ENCODE measurements at regions of chr4 and their contacts with region 1.

Region 1: GRCh38 chr4:77190053-77190452 is 33.0 kb downstream of the CCNG2 start:
- DNase-seq: peak; percentile 63 to 68
- H3K4me3 ChIP-seq: no peak overlapping the region
- H3K4me3 Mint-ChIP-seq: no peak overlapping the region
- H3K27ac Mint-ChIP-seq: no peak overlapping the region
- H3K4me1 ChIP-seq: peaks cover 13% of the 10 kb centered on the region
- H3K4me1 Mint-ChIP-seq: peaks cover 8% of the 10 kb centered on the region
- H3K27me3 ChIP-seq: no peaks in the 10 kb centered on the region
- H3K27me3 Mint-ChIP-seq: no peaks in the 10 kb centered on the region
- CTCF ChIP-seq: no peak

Region 2: DNA sequence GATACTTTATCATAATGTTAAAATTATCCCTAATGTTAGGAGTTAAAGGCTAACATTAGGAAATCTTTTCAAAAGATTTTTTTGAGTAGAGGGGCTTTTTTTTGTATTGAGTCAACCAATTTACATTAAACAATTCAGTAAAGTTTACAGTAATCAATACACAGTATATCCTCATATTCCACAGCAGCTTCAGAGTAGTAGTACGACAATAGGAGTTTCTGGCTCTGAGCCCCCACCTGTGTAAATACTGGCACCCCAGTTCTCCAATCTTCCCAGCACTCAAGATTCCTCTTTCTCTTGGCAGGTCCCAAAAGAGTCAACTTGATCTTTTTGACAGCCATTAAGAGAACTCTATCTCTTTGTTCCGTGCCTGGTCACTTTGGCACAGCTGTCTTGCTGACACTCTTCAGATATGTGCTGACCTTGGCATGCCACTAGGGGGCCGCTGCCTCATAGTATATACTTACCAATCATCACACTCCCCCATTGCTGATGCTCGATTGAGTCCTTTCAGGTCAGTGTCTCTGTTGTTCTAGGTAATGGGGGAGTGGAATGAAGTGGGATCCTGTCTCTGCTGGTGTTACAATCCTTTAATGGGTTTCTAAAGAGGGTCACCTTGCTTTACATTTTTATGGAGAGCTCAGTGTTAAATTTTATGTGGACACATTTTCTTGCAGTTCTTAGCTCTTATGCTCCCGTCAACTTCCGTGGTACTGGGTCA is 94.8 kb before region 1 on chr4:
- CTCF ChIA-PET with region 1: no interaction called
- POLR2A ChIA-PET with region 1: no interaction called
- intact Hi-C with region 1: loop called (anchors 1 kb)
- DNase-seq: peak; percentile 69 to 72
- H3K4me3 ChIP-seq: no peak overlapping the region
- H3K4me3 Mint-ChIP-seq: no peak overlapping the region
- H3K27ac Mint-ChIP-seq: no peak overlapping the region
- H3K4me1 ChIP-seq: no peaks in the 10 kb centered on the region
- H3K4me1 Mint-ChIP-seq: no peaks in the 10 kb centered on the region
- H3K27me3 ChIP-seq: no peaks in the 10 kb centered on the region
- H3K27me3 Mint-ChIP-seq: no peaks in the 10 kb centered on the region
- CTCF ChIP-seq: peak; percentile 79 to 80

Measured in Caco-2 (cell line).